Activated naive CD4-positive, alpha-beta T cell treated with anti-CD3 and anti-CD28 coated beads for 36 hours (primary cell): ENCODE measurements at regions of chr4 and their contacts with region 1.

Region 1: GRCh38 chr4:77819843-77820648 is 878 bp upstream of the CNOT6L start:
- DNase-seq: peak; percentile 97
- H3K4me3 Mint-ChIP-seq: peak overlapping the region; percentile 97
- H3K27ac Mint-ChIP-seq: peak overlapping the region; percentile 98
- H3K4me1 Mint-ChIP-seq: peaks cover 44% of the 10 kb centered on the region
- H3K27me3 Mint-ChIP-seq: no peaks in the 10 kb centered on the region

Region 2: GRCh38 chr4:77156533-77156911 is 663.5 kb before region 1 on chr4:
- CTCF ChIA-PET with region 1: no interaction called
- intact Hi-C with region 1: loop called (anchors 1 kb)
- DNase-seq: peak; percentile 97
- H3K4me3 Mint-ChIP-seq: peak overlapping the region; percentile 98
- H3K27ac Mint-ChIP-seq: peak overlapping the region; percentile 97
- H3K4me1 Mint-ChIP-seq: peaks cover 21% of the 10 kb centered on the region
- H3K27me3 Mint-ChIP-seq: no peaks in the 10 kb centered on the region

Region 3: GRCh38 chr4:77172336-77172735 is 647.7 kb before region 1 on chr4:
- CTCF ChIA-PET with region 1: no interaction called
- intact Hi-C with region 1: no loop called
- DNase-seq: no peak
- H3K4me3 Mint-ChIP-seq: no peak overlapping the region
- H3K27ac Mint-ChIP-seq: no peak overlapping the region
- H3K4me1 Mint-ChIP-seq: no peaks in the 10 kb centered on the region
- H3K27me3 Mint-ChIP-seq: no peaks in the 10 kb centered on the region

Region 4: DNA sequence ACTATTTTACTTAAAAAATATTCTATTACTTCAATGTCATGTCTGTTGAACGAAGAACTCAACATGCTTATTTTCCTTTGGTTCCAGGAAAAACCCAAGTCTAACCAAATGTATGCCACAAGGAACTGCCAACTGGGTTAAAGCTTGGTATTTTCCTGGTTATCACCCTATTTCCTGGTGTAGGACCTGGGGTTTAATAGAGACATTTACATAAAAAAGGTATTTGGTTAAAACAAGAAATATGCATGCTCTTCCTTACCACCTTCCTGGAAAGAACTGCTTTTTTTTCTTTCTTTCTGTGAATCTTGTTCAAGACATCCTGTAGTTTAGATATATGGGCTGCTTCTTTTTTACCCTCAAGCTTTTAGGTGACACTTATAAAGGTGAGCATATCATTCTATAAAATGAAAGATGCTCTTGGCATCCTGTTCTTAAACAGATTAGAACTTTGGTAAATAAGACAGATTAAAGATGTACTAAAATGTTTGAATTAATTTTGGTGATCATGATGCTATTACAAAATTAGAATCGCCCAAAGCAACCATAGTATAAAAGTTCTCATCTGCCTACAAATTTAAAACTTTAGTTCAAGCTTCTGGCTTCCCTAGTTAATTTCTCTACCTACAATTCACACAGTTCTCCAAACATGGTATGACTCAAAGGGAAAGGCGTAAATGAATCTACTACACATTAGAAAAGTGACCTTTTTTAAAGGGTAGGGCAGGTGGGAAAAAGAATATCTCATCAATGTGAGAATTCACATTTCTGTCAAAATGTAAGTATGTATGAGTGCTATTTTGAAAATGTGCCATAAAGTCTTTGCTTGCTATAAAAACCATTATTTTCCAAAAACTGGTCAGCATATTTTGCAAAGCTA is 104.4 kb before region 1 on chr4:
- CTCF ChIA-PET with region 1: no interaction called
- intact Hi-C with region 1: loop called (anchors 5 kb)
- DNase-seq: no peak
- H3K4me3 Mint-ChIP-seq: no peak overlapping the region
- H3K27ac Mint-ChIP-seq: peak overlapping the region; percentile 53
- H3K4me1 Mint-ChIP-seq: peaks cover 33% of the 10 kb centered on the region
- H3K27me3 Mint-ChIP-seq: no peaks in the 10 kb centered on the region

Region 5: DNA sequence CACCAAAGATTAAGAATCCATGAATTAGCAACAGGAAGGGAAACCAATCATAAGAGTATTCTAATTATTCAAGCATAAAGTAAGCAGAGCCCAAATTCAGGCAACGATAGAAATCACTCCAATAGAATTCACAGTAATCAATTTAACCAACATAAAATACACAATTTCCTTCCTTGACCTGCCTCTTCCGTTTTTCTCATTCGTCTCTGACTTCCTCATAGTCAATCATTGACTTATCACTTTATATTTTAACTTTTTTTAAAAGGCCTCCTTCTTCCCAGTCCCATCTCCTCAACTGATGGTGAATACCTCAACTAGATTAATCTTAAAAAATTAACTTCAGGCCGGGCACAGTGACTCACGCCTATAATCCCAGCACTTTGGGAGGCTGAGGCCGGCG is 14.2 kb before region 1 on chr4:
- CTCF ChIA-PET with region 1: interaction called, 11 read pairs
- intact Hi-C with region 1: loop called (anchors 1 kb)
- DNase-seq: no peak
- H3K4me3 Mint-ChIP-seq: no peak overlapping the region
- H3K27ac Mint-ChIP-seq: peak overlapping the region; percentile 56
- H3K4me1 Mint-ChIP-seq: peaks cover 79% of the 10 kb centered on the region
- H3K27me3 Mint-ChIP-seq: no peaks in the 10 kb centered on the region

Region 6: GRCh38 chr4:77959566-77960338 is 139.7 kb after region 1 on chr4:
- CTCF ChIA-PET with region 1: interaction called, 3 read pairs
- intact Hi-C with region 1: loop called (anchors 5 kb)
- DNase-seq: no peak
- H3K4me3 Mint-ChIP-seq: no peak overlapping the region
- H3K27ac Mint-ChIP-seq: no peak overlapping the region
- H3K4me1 Mint-ChIP-seq: peaks cover 16% of the 10 kb centered on the region
- H3K27me3 Mint-ChIP-seq: no peaks in the 10 kb centered on the region